ENCODE measurements at regions of chr11 and their contacts with region 1.

Region 1: DNA sequence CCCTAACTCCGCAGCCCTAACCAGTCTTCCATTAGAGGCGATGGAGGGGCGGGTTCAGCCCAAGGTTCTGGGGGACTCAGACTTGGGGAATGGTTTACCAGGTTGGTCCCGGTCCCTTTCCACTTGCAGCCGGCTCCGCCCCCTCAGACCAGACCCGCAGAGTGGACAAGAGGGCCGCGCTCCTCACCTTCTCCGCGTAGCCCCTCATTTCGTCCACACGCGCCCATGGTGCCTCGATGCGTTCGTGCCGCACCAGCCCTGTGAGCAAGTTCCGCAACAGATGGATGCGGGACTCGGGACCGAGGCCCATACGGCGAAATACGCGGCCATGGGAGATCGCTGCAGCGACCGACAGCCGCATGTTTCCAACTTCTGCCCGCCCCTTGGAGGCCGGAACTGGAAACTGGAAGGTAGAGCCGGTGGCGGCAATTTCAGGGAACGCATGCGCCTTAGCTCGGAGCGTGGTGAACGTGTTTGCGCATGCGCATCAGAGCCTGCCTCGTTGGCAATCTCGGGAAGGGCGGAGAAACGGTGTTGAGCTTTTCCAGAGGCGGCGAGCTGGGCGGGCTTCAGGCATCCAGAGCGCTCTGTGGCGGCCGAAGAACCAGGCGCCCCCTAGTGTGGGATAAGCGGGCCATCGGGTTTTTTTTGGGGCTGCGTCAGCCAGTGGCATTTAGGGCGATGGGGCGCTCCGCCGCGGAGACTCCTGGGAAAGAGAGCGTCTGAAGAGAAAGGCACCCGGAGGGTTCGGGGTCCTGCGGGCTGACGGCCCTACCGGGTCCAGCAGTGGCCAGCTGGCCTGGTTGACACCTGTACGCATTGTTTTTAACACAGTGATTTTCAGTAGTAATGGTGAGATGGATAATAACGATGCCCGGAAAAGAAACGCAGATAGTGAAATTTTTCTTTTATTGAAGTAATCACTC is at the start of gene MRPL17:
- DNase-seq: peak; percentile 98 to 99
- ATAC-seq: peak; percentile 99
- H3K4me3 ChIP-seq: peak within 1 kb of the TSS; percentile 81 to 98 (median 92)
- H3K27ac ChIP-seq: peak within 1 kb of the TSS; percentile 82 to 95 (median 87)
- H3K4me1 ChIP-seq: peaks cover 9 to 22% of the 10 kb centered on the region in 2 donors
- H3K27me3 ChIP-seq: no peaks in the 10 kb centered on the region
- CTCF ChIP-seq: peak; percentile 77 to 94 (median 92)
- POLR2A ChIP-seq: peak; percentile 75 to 78
- total RNA-seq, gene MRPL17: 25.1 to 33.4 (median 27.7) TPM

Region 2: DNA sequence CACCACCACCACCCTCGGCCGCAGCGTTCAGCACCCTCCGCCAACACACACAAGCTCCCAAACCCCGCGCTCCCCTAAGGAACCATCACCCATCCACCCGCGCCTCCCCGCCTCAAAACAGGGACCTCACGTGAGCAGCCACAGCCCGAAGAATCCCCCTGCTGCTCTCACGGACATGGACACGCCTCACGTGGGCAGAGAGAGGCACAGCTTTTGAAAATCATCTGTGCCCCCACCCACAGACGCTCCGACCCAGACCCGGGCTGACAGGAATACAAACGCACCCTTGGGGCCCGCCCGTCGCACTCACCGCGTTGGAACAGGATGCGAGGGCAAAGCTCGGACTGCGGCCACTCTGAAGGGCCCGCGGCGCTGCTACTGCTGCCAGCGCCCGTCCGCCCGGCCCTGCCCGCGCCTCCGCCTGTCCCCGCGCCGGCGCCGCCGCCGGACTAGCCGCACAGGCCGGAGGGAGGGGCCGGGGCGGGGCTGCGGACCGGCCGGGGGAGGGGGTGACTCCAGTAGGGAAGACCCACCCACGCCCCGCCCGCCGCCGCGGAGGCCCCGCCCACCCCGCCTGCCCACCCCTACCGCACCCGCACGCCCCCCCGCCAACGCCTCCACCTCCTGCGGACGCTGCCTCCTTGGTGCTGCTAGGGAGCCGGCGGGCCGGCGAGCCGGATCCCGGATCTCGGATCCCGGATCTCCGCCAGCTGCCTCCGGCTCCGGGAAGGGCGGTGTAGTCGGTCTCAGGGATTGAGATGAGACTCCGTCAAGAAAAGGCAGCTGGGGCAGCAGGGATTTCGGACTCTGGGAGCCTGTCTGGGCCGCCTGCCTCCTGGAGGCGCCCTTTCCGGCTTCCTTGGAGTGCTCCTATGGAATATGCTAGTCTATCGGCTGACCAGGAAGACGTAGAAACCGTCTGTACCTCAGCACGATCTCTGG is 209.4 kb before region 1 on chr11 and contains the start of gene TRIM3:
- in situ Hi-C with region 1: no loop called
- intact Hi-C with region 1: loop called (anchors 1 kb)
- DNase-seq: peak; percentile 92 to 93
- ATAC-seq: peak; percentile 81 to 84
- H3K4me3 ChIP-seq: peak within 1 kb of the TSS; percentile 75 to 94 (median 80)
- H3K27ac ChIP-seq: peak within 1 kb of the TSS; percentile 87 to 99 (median 92)
- H3K4me1 ChIP-seq: peaks cover 14 to 15% of the 10 kb centered on the region in 2 donors
- H3K27me3 ChIP-seq: no peaks in the 10 kb centered on the region
- CTCF ChIP-seq: peak in 2 of 5 experiments; percentile 17 to 21
- POLR2A ChIP-seq: peak; percentile 87 to 93
- total RNA-seq, gene TRIM3: 15.3 to 20.0 (median 16.5) TPM

Region 3: GRCh38 chr11:6619004-6619745 is 64.0 kb before region 1 on chr11 and contains the start of gene TPP1:
- in situ Hi-C with region 1: no loop called
- intact Hi-C with region 1: loop called (anchors 1 kb)
- DNase-seq: peak; percentile 90 to 93
- ATAC-seq: peak; percentile 100
- H3K4me3 ChIP-seq: peak within 1 kb of the TSS; percentile 65 to 84 (median 74)
- H3K27ac ChIP-seq: peak within 1 kb of the TSS; percentile 80 to 94 (median 90)
- H3K4me1 ChIP-seq: peaks cover 15 to 16% of the 10 kb centered on the region in 2 donors
- H3K27me3 ChIP-seq: no peaks in the 10 kb centered on the region
- CTCF ChIP-seq: no peak
- POLR2A ChIP-seq: peak; percentile 68 to 85
- total RNA-seq, gene TPP1: 13.9 to 43.4 (median 19.6) TPM

Region 4: GRCh38 chr11:7364660-7365059 is 681.5 kb after region 1 on chr11:
- in situ Hi-C with region 1: no loop called
- intact Hi-C with region 1: no loop called
- DNase-seq: no peak
- ATAC-seq: no peak
- H3K4me3 ChIP-seq: no peak overlapping the region
- H3K27ac ChIP-seq: no peak overlapping the region
- H3K4me1 ChIP-seq: no peaks in the 10 kb centered on the region
- H3K27me3 ChIP-seq: no peaks in the 10 kb centered on the region
- CTCF ChIP-seq: no peak
- POLR2A ChIP-seq: no peak

Measured in gastrocnemius medialis (tissue), 4 donors.